WTC11 (cell line): ENCODE measurements at regions of chr4 and their contacts with region 1.

Region 1: DNA sequence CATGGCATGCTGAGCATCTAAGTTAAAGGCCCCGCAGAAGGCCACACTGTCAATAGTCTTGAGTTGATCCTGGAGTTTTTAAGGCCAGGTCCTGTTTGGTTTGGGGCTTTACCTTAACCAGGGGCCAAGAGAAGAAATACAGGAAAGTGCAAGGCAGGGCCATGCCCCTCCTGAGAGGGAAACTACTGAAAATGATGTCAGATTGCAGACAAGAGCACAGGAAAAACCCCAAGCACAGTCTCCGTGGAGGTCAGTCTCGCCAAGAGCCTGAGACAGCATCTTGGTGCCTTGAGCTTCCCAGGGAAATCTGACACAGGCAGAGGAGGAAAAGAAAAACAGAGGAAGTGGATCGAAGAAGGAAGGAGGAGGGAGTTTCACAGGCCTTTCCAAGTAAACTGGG is 32.2 kb upstream of the GATB start:
- DNase-seq: no peak
- ATAC-seq: no peak
- H3K4me3 Mint-ChIP-seq: no peak overlapping the region
- H3K27ac Mint-ChIP-seq: no peak overlapping the region
- H3K4me1 Mint-ChIP-seq: peaks cover 32% of the 10 kb centered on the region
- H3K27me3 Mint-ChIP-seq: peaks cover 41% of the 10 kb centered on the region
- CTCF ChIP-seq: no peak

Region 2: DNA sequence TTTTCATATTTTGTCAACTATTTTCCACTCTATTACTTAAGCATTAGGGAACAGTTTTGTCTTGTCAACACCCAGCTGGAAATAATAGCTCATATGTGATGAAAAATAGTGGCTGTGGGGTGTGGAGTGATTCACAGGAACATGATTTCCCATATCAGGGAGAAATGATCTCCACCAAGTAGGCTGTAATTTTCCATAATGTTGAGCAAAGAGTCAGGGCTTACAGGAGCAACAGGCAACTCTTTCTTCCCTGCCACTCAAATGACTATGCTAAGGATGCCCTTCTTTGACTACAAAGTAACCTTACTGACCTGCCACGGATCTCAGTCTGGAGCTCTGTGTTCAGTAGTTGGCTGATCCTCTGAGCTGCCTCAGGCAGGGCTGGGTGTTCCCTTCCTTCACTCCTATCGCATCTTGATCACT is 57.8 kb after region 1 on chr4:
- CTCF ChIA-PET with region 1: no interaction called
- POLR2A ChIA-PET with region 1: interaction called, 11 read pairs
- DNase-seq: no peak
- ATAC-seq: no peak
- H3K4me3 Mint-ChIP-seq: no peak overlapping the region
- H3K27ac Mint-ChIP-seq: no peak overlapping the region
- H3K4me1 Mint-ChIP-seq: peaks cover 12% of the 10 kb centered on the region
- H3K27me3 Mint-ChIP-seq: no peaks in the 10 kb centered on the region; the same call in 1 of the 2 replicates
- CTCF ChIP-seq: no peak